ENCODE measurements at regions of chr3 and their contacts with region 1.

Region 1: DNA sequence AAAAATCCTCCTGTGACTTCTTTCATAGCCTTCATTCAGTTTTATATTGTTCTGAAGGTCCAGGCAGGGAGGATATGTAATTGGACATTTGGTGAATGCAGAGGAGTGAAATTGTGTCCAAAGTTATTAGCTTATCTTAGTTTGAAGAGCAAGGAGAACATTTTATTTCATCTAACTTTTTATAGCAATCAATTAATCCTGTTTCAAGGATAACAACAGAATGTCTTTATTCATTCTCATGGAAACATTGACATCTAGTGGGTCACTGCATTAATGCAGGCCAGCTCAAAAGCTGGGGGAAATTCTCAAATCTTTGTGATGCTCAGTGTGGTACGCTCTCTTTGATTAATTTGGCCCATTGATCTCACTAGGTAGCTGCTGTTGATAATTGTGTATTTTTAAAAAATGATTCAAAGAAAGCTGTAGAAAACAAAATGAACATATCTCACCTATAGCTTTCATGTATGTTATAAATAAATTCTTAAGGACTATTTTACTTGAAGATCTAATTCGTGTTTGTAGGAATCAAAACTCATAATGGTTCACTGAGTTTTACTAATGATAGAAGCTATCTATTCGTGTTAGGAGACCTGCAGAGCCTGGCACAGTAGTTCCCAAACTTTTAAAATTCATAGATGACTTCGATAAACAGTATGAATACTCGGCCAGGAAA is 150.8 kb upstream of the KCNMB2 start:
- DNase-seq: peak; percentile 72
- ATAC-seq: peak; percentile 45; the same call in 1 of the 2 replicates
- H3K4me3 ChIP-seq: no peak overlapping the region
- H3K27ac ChIP-seq: no peak overlapping the region
- H3K4me1 ChIP-seq: peaks cover 18% of the 10 kb centered on the region
- H3K27me3 ChIP-seq: no peaks in the 10 kb centered on the region
- CTCF ChIP-seq: peak; percentile 94

Region 2: DNA sequence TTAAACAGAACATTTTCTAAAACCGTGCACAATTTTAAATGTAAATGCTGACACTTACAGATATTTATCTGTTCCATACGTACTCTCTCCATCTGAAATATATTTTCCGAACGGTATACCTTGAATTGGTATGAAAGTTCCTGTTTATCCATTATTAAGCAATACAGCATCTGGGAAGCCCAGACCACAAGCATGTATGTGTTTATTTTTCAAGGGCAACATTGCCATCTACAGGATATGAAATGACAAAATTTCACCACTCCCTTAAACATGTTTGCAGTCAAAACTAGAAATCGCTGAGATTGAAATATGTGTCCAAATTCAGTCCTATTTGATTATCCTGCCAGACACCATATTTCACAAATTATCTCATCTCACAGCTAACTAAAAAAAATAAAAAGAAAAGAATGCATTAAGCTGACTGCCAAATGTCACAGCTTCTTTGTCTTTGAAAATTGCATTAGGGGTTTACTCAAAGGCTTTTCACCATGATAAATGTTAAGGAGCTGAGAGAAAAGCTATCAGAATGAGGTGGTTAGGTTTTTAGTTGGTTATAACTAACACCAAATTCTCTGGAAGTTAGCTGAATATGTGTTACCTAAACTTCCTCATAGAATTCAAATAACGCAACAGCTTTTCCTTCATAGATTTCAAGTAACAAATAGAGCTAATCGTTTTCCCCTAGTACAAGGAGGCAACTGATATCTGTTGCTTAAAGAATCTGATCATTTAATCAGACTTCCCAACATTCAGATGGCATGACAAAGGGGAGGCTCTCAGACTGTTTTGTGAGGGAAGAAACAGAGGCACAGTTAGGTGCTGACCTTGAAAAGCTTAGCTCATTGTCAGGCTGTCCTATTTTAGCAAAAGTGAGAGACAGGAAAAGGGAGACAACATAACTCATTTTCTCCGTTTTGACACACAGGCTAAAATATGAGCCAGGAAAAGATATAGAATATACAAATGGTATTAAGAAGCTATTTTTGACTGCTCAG is 1721.3 kb before region 1 on chr3:
- CTCF ChIA-PET with region 1: no interaction called
- POLR2A ChIA-PET with region 1: no interaction called
- intact Hi-C with region 1: loop called (anchors 5 kb)
- DNase-seq: peak; percentile 74
- ATAC-seq: peak; percentile 97
- H3K4me3 ChIP-seq: no peak overlapping the region
- H3K27ac ChIP-seq: no peak overlapping the region
- H3K4me1 ChIP-seq: 0 out of 2 replicates have a peak, but pooled peaks cover 5% of the 10 kb centered on the region
- H3K27me3 ChIP-seq: no peaks in the 10 kb centered on the region
- CTCF ChIP-seq: peak; percentile 73

Region 3: DNA sequence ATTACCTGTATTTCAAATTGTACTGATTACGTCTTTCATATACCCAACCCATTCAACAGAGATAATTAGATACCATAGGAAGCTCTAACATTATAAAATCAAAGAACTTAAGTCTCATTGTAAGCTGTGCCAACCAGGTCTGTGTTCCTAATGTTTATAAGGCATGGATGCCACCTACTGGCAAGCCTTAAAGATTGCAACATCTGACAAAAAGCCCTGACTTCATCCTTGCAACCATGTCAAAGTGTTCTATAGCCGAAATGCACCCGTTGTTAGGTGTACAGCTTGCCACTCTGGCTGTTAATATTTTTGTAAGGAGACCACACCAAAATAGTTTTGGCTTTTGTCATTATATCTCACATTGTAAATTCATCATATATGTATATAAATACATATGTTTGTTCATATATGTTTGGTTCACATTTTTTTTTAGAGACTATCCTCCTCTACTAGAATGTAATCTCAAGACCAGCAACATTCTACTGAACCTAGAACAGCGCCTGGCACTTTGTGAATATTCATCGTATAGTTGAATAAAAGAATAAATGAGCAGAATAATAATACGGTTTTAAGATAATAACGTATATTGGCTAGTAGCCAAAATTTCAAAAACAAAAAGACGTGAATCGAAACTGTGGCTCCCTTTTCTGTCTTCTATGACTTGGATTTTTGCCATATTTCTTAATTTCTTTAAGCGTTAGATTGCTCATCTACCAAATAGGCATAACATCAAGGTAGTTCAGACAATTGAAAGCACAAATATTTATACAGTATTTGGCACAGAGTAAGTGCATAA is 1446.2 kb before region 1 on chr3:
- CTCF ChIA-PET with region 1: interaction called, 4 read pairs
- POLR2A ChIA-PET with region 1: no interaction called
- intact Hi-C with region 1: loop called (anchors 10 kb)
- DNase-seq: peak; percentile 86
- ATAC-seq: peak; percentile 96
- H3K4me3 ChIP-seq: peak overlapping the region; percentile 40; the same call in 1 of the 2 replicates
- H3K27ac ChIP-seq: no peak overlapping the region
- H3K4me1 ChIP-seq: peaks cover 4% of the 10 kb centered on the region; the same call in 1 of the 2 replicates
- H3K27me3 ChIP-seq: no peaks in the 10 kb centered on the region
- CTCF ChIP-seq: peak; percentile 94

Region 4: DNA sequence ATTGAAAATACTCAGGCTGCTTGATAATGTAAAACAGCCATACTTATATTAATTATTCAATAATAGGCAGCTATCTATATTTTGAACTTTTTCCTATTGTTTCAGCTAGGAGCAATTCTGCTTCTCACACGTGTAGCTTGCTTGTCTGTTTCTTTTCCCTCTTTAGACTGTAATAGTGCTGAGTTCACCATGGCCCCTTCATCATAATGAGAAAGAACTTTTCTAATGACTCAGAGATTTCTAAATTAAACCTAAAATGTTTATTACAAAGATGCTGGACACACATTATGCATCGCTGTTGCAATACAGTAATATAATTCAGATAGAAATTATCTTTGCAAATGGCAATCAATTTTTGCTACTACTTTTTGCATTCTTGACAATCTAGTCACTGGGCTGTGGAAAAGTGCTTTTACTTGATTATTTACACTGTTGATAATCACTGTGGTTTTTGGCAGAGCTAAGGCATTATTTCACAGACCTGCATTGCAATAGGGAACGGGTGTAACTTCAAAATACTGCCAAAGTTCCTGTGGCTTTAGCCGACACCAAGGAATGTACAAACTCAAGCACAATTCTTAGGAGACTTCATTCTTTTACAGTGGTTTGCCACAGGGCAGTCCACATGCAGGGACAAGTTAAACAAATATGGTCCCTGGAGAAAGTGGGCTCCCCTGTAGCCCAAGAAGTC is 907.1 kb before region 1 on chr3:
- CTCF ChIA-PET with region 1: no interaction called
- POLR2A ChIA-PET with region 1: no interaction called
- intact Hi-C with region 1: loop called (anchors 10 kb)
- DNase-seq: peak; percentile 98
- ATAC-seq: peak; percentile 92
- H3K4me3 ChIP-seq: peak overlapping the region; percentile 24; the same call in 1 of the 2 replicates
- H3K27ac ChIP-seq: peak overlapping the region; percentile 84
- H3K4me1 ChIP-seq: peaks cover 26% of the 10 kb centered on the region
- H3K27me3 ChIP-seq: no peaks in the 10 kb centered on the region
- CTCF ChIP-seq: no peak

Region 5: GRCh38 chr3:177777699-177778098 is 607.7 kb before region 1 on chr3:
- CTCF ChIA-PET with region 1: interaction called, 3 read pairs
- POLR2A ChIA-PET with region 1: no interaction called
- intact Hi-C with region 1: loop called (anchors 10 kb)
- DNase-seq: peak; percentile 67
- ATAC-seq: peak; percentile 67
- H3K4me3 ChIP-seq: no peak overlapping the region
- H3K27ac ChIP-seq: no peak overlapping the region
- H3K4me1 ChIP-seq: peaks cover 20% of the 10 kb centered on the region
- H3K27me3 ChIP-seq: no peaks in the 10 kb centered on the region
- CTCF ChIP-seq: peak; percentile 73

Measured in PC-3 (cell line).